MCF 10A (cell line): ENCODE measurements at regions of chr13 and their contacts with region 1.

Region 1: DNA sequence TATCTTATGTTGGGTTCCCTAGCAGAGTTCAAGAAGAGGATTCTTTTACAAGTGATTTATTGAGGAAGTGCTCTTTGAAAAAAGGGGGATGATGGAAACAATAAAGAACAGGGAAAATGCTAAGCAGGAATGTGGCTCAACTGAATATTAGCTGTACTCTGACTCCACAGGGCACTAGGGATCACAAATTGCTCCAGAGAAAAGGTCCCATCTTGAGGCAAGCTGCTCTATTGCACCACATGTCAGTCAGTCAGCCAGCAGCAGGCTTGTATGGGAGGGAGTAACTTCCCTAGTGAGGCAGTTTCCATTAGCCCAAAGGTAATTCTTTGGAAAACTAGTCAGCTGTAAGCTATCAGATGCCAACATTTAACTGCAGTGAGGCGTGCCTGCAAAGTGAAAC is 73.3 kb upstream of the FNDC3A start:
- DNase-seq: peak; percentile 63
- H3K4me3 Mint-ChIP-seq: no peak overlapping the region
- H3K27ac Mint-ChIP-seq: no peak overlapping the region
- H3K4me1 Mint-ChIP-seq: no peaks in the 10 kb centered on the region
- H3K27me3 Mint-ChIP-seq: no peaks in the 10 kb centered on the region
- CTCF ChIP-seq: no peak

Region 2: DNA sequence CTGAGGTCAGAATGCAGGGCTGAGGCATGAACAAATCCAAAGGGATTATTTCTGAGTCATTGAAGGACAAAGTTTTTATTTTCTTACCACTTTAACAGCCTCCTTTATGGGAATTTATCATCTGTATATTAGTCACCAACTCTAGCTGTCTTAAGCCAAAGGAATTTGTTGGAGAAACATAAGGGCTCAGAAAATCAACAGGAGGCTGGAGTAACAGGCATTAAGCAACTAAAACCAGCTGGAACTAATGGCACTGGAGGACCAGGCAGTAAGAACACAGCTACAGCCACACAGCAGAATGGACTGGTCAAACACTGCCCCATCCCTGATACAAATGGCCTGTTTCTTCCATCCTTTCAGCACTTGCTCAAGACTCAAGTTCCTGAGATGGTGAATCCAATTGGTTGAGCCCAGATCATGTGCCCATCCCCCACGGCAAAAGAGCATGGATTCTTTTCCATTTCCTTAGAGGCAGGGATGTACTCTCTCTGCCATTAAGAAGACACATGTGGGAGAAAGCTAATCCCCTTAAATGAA is 83.8 kb before region 1 on chr13:
- CTCF ChIA-PET with region 1: no interaction called
- POLR2A ChIA-PET with region 1: no interaction called
- intact Hi-C with region 1: loop called (anchors 10 kb)
- DNase-seq: peak; percentile 80
- H3K4me3 Mint-ChIP-seq: no peak overlapping the region
- H3K27ac Mint-ChIP-seq: peak overlapping the region; percentile 8
- H3K4me1 Mint-ChIP-seq: peaks cover 34% of the 10 kb centered on the region
- H3K27me3 Mint-ChIP-seq: no peaks in the 10 kb centered on the region
- CTCF ChIP-seq: no peak